ENCODE measurements at regions of chr7 and their contacts with region 1.

Region 1: DNA sequence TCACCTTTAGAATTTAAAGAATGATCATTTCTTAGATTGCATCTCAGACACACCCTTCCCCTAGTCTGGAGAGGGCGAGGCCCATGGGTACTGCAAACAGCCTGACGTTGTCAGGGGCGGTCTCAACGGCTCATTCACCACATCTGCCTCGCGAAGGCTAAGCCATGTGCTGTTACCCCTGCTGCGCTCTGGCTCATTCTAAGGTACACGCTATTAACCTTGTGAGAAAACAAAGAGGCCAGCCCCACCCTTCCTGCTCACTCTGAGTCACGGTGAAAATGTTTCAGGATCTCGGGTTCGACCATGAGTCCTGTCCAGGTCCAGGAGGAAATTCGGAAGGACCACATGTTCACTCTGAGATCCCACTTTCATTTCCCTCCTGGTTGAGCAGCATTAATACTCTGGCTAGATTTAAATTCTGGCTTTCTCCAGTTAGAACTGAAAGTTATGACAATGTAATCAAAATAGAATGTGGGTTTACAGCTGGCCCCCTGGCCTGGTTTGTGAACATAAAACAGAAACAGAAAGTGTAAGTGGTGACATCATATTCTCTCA is 55.2 kb downstream of the EGFR start:
- DNase-seq: peak; percentile 27
- ATAC-seq: peak; percentile 86
- H3K4me3 Mint-ChIP-seq: peak overlapping the region; percentile 70
- H3K27ac Mint-ChIP-seq: peak overlapping the region; percentile 73
- H3K4me1 Mint-ChIP-seq: peaks cover 23% of the 10 kb centered on the region
- H3K27me3 Mint-ChIP-seq: peaks cover 5% of the 10 kb centered on the region
- CTCF ChIP-seq: no peak

Region 2: DNA sequence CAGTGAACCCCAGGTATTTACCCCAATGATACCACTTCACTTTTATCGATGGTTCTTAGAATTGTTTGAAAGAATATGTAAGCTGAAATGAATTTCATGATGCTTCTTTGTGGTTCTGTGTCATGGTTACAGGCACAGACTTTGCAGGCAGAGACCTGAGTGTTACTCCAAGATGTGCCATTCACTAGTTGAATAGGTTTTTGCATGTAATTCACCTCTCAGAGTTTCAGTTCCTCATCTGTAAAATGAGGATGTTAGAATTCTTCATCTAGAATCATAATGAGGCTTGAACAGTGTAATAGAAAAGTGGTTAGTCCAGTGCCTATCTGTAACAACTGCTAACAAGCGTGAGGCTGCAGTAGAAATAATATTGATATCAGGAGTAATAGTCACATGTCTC is 477.3 kb before region 1 on chr7:
- CTCF ChIA-PET with region 1: no interaction called
- POLR2A ChIA-PET with region 1: no interaction called
- intact Hi-C with region 1: no loop called
- DNase-seq: no peak
- ATAC-seq: peak; percentile 25
- H3K4me3 Mint-ChIP-seq: no peak overlapping the region
- H3K27ac Mint-ChIP-seq: no peak overlapping the region
- H3K4me1 Mint-ChIP-seq: no peaks in the 10 kb centered on the region
- H3K27me3 Mint-ChIP-seq: no peaks in the 10 kb centered on the region
- CTCF ChIP-seq: no peak

Region 3: GRCh38 chr7:54995631-54996340 is 78.2 kb before region 1 on chr7:
- CTCF ChIA-PET with region 1: no interaction called
- POLR2A ChIA-PET with region 1: no interaction called
- intact Hi-C with region 1: no loop called
- DNase-seq: no peak
- ATAC-seq: no peak
- H3K4me3 Mint-ChIP-seq: no peak overlapping the region
- H3K27ac Mint-ChIP-seq: no peak overlapping the region
- H3K4me1 Mint-ChIP-seq: no peaks in the 10 kb centered on the region
- H3K27me3 Mint-ChIP-seq: peaks cover 2% of the 10 kb centered on the region
- CTCF ChIP-seq: no peak

Region 4: GRCh38 chr7:55094092-55094690 is 20.2 kb after region 1 on chr7:
- CTCF ChIA-PET with region 1: no interaction called
- POLR2A ChIA-PET with region 1: no interaction called
- intact Hi-C with region 1: no loop called
- DNase-seq: no peak
- ATAC-seq: no peak
- H3K4me3 Mint-ChIP-seq: no peak overlapping the region
- H3K27ac Mint-ChIP-seq: no peak overlapping the region
- H3K4me1 Mint-ChIP-seq: no peaks in the 10 kb centered on the region
- H3K27me3 Mint-ChIP-seq: peaks cover 29% of the 10 kb centered on the region
- CTCF ChIP-seq: no peak

Region 5: GRCh38 chr7:55140221-55140940 is 66.4 kb after region 1 on chr7:
- CTCF ChIA-PET with region 1: no interaction called
- POLR2A ChIA-PET with region 1: no interaction called
- intact Hi-C with region 1: loop called (anchors 5 kb)
- DNase-seq: no peak
- ATAC-seq: peak; percentile 67
- H3K4me3 Mint-ChIP-seq: no peak overlapping the region
- H3K27ac Mint-ChIP-seq: no peak overlapping the region
- H3K4me1 Mint-ChIP-seq: peaks cover 7% of the 10 kb centered on the region
- H3K27me3 Mint-ChIP-seq: peaks cover 9% of the 10 kb centered on the region
- CTCF ChIP-seq: no peak

Region 6: DNA sequence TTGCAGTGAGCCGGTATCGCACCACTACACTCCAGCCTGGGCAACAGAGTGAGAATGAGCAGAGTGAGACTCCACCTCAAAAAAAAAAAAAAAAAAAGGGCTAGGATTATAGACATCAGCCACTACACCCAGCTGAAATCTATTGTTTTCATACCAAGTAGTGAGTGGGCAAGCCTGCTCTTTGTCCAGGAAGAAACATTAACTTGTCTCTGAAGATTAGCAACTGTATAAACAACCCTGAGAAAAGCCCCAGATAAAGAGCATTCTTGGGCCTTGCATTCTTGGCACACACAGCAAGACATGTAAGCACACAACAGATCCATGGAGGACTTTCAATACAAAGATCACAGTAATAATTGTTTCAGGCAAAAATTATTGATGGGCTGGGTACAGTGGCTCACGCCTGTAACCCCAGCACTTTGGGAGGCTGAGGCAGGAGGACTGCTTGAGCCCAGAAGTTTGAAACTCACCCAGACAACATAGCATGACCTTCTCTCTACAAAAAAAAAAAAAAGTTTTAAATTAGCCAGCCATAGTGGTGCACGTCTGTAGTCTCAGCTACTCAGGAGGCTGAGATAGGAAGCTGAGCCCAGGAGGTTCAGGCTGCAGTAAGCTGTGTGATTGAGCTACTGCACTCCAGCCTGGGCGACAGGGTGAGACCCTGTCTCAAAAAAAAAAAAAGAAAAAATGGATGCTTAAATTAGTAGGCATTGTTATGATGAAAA is 972.9 kb after region 1 on chr7:
- CTCF ChIA-PET with region 1: no interaction called
- POLR2A ChIA-PET with region 1: no interaction called
- intact Hi-C with region 1: no loop called
- DNase-seq: no peak
- ATAC-seq: no peak
- H3K4me3 Mint-ChIP-seq: no peak overlapping the region
- H3K27ac Mint-ChIP-seq: no peak overlapping the region
- H3K4me1 Mint-ChIP-seq: peaks cover 12% of the 10 kb centered on the region
- H3K27me3 Mint-ChIP-seq: no peaks in the 10 kb centered on the region
- CTCF ChIP-seq: no peak